ENCODE measurements at regions of chr1 and their contacts with region 1.

Region 1: GRCh38 chr1:230084138-230084880 is 17.3 kb downstream of the GALNT2 start:
- DNase-seq: peak; percentile 91
- H3K4me3 Mint-ChIP-seq: peak overlapping the region; percentile 39
- H3K27ac Mint-ChIP-seq: peak overlapping the region; percentile 82
- H3K4me1 Mint-ChIP-seq: peaks cover 68% of the 10 kb centered on the region
- H3K27me3 Mint-ChIP-seq: no peaks in the 10 kb centered on the region

Region 2: DNA sequence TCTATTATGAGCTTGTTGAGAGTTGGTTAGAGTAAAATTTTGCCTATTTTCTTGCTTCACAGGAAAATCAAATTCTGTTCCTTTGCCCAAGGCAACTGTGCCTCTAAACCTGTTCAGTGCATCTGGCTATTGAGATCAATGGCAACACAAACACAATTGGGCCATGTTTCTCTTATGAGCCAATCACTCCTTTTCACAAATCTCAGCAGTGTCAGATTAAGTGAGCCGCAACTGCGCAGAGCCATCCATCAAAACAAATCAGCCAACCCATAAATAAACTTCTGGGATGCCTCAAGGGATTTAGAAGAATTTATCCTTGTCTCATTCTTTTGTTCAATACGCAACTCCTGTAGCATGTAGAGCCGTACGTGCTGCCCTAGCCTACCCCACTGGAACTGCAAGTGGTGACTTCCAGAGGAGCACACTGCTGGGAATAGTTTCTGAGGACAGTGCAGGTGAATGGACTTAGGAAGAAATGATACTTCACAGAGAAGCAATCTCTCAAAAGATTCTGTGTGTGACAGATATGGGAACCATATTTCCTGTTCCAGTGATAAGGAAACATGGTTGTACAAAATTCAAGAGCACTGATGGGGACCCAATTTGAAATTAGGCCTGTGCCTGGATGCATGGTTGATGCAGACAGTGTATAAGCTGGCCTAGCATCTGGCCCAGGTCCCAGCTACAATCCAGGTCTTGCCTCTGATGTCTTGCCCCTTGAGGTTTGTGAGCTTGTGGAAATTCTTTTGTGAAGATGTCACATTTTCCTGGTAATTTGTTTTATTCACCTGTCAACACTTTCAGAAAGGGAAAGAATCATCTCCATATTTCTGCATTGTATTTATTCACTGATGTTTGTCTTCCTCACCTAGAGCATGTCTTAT is 292.1 kb before region 1 on chr1:
- CTCF ChIA-PET with region 1: no interaction called
- intact Hi-C with region 1: no loop called
- DNase-seq: no peak
- H3K4me3 Mint-ChIP-seq: no peak overlapping the region
- H3K27ac Mint-ChIP-seq: no peak overlapping the region
- H3K4me1 Mint-ChIP-seq: no peaks in the 10 kb centered on the region
- H3K27me3 Mint-ChIP-seq: peaks cover 4% of the 10 kb centered on the region

Region 3: GRCh38 chr1:230031131-230031530 is 53.2 kb before region 1 on chr1:
- CTCF ChIA-PET with region 1: interaction called, 3 read pairs
- intact Hi-C with region 1: loop called (anchors 1 kb)
- DNase-seq: peak; percentile 48
- H3K4me3 Mint-ChIP-seq: no peak overlapping the region
- H3K27ac Mint-ChIP-seq: peak overlapping the region; percentile 85
- H3K4me1 Mint-ChIP-seq: peaks cover 29% of the 10 kb centered on the region
- H3K27me3 Mint-ChIP-seq: no peaks in the 10 kb centered on the region

Region 4: GRCh38 chr1:230066466-230067404 is 17.6 kb before region 1 on chr1 and contains the start of gene GALNT2:
- CTCF ChIA-PET with region 1: interaction called, 3 read pairs
- intact Hi-C with region 1: loop called (anchors 1 kb)
- DNase-seq: peak; percentile 89
- H3K4me3 Mint-ChIP-seq: peak within 1 kb of the TSS; percentile 88
- H3K27ac Mint-ChIP-seq: peak within 1 kb of the TSS; percentile 83
- H3K4me1 Mint-ChIP-seq: peaks cover 44% of the 10 kb centered on the region
- H3K27me3 Mint-ChIP-seq: no peaks in the 10 kb centered on the region
- total RNA-seq, gene GALNT2: 59.8 to 62.4 TPM

Region 5: GRCh38 chr1:230073371-230074035 is 10.8 kb before region 1 on chr1:
- CTCF ChIA-PET with region 1: interaction called, 3 read pairs
- intact Hi-C with region 1: loop called (anchors 1 kb)
- DNase-seq: peak; percentile 33
- H3K4me3 Mint-ChIP-seq: no peak overlapping the region
- H3K27ac Mint-ChIP-seq: no peak overlapping the region
- H3K4me1 Mint-ChIP-seq: peaks cover 81% of the 10 kb centered on the region
- H3K27me3 Mint-ChIP-seq: no peaks in the 10 kb centered on the region

Region 6: GRCh38 chr1:230094746-230095145 is 10.4 kb after region 1 on chr1:
- CTCF ChIA-PET with region 1: no interaction called
- intact Hi-C with region 1: no loop called
- DNase-seq: no peak
- H3K4me3 Mint-ChIP-seq: no peak overlapping the region
- H3K27ac Mint-ChIP-seq: no peak overlapping the region
- H3K4me1 Mint-ChIP-seq: peaks cover 8% of the 10 kb centered on the region
- H3K27me3 Mint-ChIP-seq: no peaks in the 10 kb centered on the region

Region 7: DNA sequence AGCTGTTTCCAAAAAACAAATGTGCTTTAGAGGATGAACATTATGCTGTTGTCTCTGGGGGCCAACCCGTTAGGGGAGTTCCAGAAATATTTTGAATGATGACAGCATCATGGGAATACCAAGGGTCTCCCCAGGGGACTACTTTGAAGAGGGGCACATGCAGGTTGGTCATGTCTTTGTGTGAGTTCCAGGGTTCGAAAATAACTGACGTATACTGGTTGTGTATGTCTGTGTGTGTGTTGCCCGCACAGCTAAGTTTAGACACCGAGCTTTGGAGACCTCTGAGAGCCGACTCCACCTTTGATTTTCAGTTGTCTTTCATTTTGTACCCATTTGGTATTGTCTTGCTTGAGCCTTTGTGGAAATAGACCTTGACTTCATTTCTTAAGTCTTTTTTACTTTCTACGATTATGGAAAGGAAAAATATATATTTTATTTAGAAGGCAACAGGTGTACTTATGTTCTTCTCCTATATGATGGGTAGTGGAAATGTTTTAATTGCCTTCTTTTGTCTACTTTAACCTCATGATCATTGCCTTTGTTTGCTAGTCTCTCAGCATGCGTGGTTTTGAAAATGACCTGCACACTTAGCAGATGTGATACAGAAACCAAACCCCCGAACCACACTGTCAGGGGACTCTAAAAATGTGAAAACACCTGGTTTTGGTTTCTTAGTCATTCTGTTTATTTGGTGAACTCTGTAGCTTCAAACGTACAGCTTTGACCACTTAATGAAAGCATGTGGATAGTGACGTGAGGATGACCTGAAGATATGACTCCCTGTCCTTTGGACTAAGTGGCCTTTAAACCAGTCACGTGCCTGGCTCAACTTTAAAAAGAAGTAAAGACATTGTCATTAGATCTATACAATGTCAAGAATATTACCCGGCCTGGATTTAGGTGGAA is 39.2 kb after region 1 on chr1:
- CTCF ChIA-PET with region 1: no interaction called
- intact Hi-C with region 1: loop called (anchors 1 kb)
- DNase-seq: peak; percentile 63
- H3K4me3 Mint-ChIP-seq: no peak overlapping the region
- H3K27ac Mint-ChIP-seq: no peak overlapping the region
- H3K4me1 Mint-ChIP-seq: peaks cover 73% of the 10 kb centered on the region
- H3K27me3 Mint-ChIP-seq: no peaks in the 10 kb centered on the region